Naive thymus-derived CD4-positive, alpha-beta T cell (primary cell): ENCODE measurements at regions of chr22 and their contacts with region 1.

Region 1: DNA sequence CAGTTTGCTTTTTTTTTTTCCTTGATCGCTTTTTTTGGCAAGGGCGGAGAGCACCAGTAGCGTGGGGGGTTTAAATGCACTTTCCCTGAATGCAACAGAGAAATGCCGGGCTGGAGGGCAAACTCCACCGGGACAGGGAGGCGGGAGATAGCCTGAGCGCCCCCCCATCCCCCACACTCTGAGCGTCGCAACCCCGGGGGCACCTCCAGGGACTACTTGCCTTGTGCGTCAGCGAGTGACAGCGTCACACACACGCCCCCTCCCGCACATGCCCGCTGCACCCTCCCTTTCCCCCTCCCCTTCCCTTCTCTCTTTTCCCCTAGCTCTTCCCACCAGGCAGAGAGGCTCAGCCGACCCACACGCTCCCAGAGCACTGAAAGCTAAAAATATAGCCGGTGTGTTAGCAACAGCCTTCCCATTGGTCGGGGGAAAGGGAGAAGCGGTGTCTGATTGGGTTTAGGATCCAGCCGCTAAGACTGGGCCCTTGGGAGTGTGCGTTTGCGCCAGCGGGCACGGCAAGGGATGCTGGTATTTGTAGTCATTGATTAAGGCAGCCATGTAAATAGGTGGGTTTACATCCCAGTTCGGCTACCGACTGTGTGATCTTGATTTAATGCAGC is 1.7 kb upstream of the TOB2 start:
- DNase-seq: peak; percentile 62 to 95 (median 92)
- ATAC-seq: peak; percentile 78
- H3K4me3 ChIP-seq: peak overlapping the region; percentile 90
- H3K4me3 Mint-ChIP-seq: peak overlapping the region; percentile 92 to 98 (median 94)
- H3K27ac ChIP-seq: peak overlapping the region; percentile 88
- H3K27ac Mint-ChIP-seq: peak overlapping the region; percentile 91 to 99 (median 94)
- H3K4me1 ChIP-seq: peaks cover 7% of the 10 kb centered on the region in 2 donors
- H3K4me1 Mint-ChIP-seq: peaks cover 6 to 25% (median 21%) of the 10 kb centered on the region in 7 donors
- H3K27me3 ChIP-seq: no peaks in the 10 kb centered on the region
- H3K27me3 Mint-ChIP-seq: no peaks in the 10 kb centered on the region

Region 2: DNA sequence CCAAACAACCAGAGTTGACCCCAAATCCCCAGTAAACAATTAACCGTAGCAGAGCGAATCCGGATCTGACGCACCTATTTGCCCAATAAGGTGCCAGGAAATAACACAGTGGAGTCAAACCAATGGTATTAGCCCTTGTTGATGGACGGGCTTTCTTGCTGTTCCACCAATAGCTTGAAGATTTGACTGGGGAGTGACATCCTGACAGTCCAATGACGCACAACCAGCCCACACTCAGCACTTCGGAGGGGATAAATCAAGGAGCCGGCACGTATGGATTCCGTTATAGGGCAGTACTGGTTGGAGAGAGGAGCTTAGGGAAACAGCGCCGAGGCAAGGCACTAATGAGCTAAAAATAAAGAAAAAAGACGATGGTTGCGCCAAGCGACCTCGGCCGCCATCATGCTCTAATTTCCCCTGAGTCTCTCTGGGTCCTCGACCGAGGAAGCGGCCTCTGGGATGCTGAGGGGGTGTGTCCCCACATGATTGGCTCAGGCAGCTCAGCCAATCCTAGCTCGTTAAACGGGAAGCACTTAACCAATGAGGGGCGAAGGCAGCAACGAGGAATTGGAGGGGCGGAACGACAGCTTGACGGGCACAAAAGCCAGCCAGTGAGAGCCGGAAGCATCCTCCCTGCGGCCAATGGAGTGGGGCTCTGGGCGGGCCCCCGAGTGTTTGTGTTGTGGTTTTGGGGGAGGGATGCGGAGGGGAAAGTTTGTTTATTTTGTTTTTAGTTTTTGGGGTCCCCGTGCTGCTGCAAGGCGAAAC is 1404.0 kb before region 1 on chr22:
- CTCF ChIA-PET with region 1: no interaction called
- POLR2A ChIA-PET with region 1: no interaction called
- intact Hi-C with region 1: loop called in 1 of 2 experiments (anchors 10 kb)
- DNase-seq: peak; percentile 87 to 100 (median 99)
- ATAC-seq: peak; percentile 92
- H3K4me3 ChIP-seq: peak overlapping the region; percentile 81
- H3K4me3 Mint-ChIP-seq: peak overlapping the region; percentile 94 to 99 (median 98)
- H3K27ac ChIP-seq: peak overlapping the region; percentile 88
- H3K27ac Mint-ChIP-seq: peak overlapping the region; percentile 98 to 100 (median 99)
- H3K4me1 ChIP-seq: peaks cover 15 to 29% of the 10 kb centered on the region in 2 donors
- H3K4me1 Mint-ChIP-seq: peaks cover 23 to 53% (median 40%) of the 10 kb centered on the region in 7 donors
- H3K27me3 ChIP-seq: no peaks in the 10 kb centered on the region
- H3K27me3 Mint-ChIP-seq: peaks cover 3 to 17% (median 7%) of the 10 kb centered on the region in 5 donors

Region 3: GRCh38 chr22:40950962-40951794 is 497.1 kb before region 1 on chr22 and contains the start of gene RBX1:
- CTCF ChIA-PET with region 1: no interaction called
- POLR2A ChIA-PET with region 1: interaction called, 3 read pairs
- intact Hi-C with region 1: loop called (anchors 1 kb)
- DNase-seq: peak; percentile 96 to 100 (median 99)
- ATAC-seq: peak; percentile 92
- H3K4me3 ChIP-seq: peak within 1 kb of the TSS; percentile 98
- H3K4me3 Mint-ChIP-seq: peak within 1 kb of the TSS; percentile 91 to 99 (median 98)
- H3K27ac ChIP-seq: peak within 1 kb of the TSS; percentile 99
- H3K27ac Mint-ChIP-seq: peak within 1 kb of the TSS; percentile 96 to 100 (median 99)
- H3K4me1 ChIP-seq: peaks cover 16 to 19% of the 10 kb centered on the region in 2 donors
- H3K4me1 Mint-ChIP-seq: peaks cover 20 to 43% (median 39%) of the 10 kb centered on the region in 7 donors
- H3K27me3 ChIP-seq: no peaks in the 10 kb centered on the region
- H3K27me3 Mint-ChIP-seq: no peaks in the 10 kb centered on the region
- total RNA-seq, gene RBX1: 28.9 to 91.3 (median 32.7) TPM

Region 4: DNA sequence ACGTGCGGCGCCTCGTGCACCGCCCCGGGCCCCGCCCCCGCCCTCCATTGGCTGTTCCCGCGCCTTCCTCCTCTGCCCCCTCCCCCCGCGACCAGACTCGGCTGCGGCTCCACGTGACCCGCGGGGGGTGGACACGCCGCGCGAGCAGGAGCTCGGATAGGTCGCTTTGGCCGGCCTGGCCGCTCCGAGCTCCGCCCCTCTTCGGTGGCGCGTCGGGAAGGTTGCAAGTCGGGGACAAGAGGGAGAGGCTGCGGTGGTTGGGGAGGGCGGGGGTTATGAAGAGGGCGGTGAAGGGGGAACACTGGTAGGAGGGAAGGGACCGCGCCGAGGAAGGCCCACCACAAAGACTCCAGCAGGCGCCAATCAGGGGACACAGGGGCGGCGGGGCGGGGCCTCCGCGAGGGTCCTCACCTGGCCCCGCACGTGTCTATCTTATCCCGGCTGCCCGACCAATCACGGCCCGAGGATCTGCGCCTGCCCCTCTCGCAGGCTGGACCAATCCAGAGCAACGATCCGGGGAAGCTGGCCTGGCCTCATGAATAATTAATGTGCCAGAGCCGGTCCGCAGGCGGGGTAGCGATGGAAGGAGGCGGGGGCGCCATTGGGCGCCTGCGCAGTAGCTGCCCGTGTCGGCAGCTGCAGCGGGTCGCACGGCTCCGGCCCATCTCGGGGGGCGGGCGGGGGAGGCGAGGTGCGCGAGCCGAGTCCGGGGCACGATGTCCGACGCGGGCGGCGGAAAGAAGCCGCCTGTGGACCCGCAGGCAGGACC is 66.8 kb before region 1 on chr22 and contains the start of gene TEF:
- CTCF ChIA-PET with region 1: no interaction called
- POLR2A ChIA-PET with region 1: interaction called, 23 read pairs
- intact Hi-C with region 1: loop called (anchors 1 kb)
- DNase-seq: peak; percentile 97 to 99 (median 98)
- ATAC-seq: peak; percentile 89
- H3K4me3 ChIP-seq: peak within 1 kb of the TSS; percentile 86
- H3K4me3 Mint-ChIP-seq: peak within 1 kb of the TSS; percentile 90 to 97 (median 94)
- H3K27ac ChIP-seq: peak within 1 kb of the TSS; percentile 95
- H3K27ac Mint-ChIP-seq: peak within 1 kb of the TSS; percentile 94 to 99 (median 98)
- H3K4me1 ChIP-seq: peaks cover 5 to 14% of the 10 kb centered on the region in 2 donors
- H3K4me1 Mint-ChIP-seq: peaks cover 5 to 29% (median 19%) of the 10 kb centered on the region in 7 donors
- H3K27me3 ChIP-seq: no peaks in the 10 kb centered on the region
- H3K27me3 Mint-ChIP-seq: peaks cover 0 to 5% (median 0%) of the 10 kb centered on the region in 5 donors
- total RNA-seq, gene TEF: 3.8 to 8.4 (median 6.2) TPM

Region 5: GRCh38 chr22:41436322-41437113 is 11.8 kb before region 1 on chr22:
- CTCF ChIA-PET with region 1: no interaction called
- POLR2A ChIA-PET with region 1: interaction called, 14 read pairs
- intact Hi-C with region 1: no loop called
- DNase-seq: no peak
- ATAC-seq: no peak
- H3K4me3 ChIP-seq: no peak overlapping the region
- H3K4me3 Mint-ChIP-seq: peak overlapping the region in 1 of 10 donors; percentile 3
- H3K27ac ChIP-seq: no peak overlapping the region
- H3K27ac Mint-ChIP-seq: peak overlapping the region in 4 of 9 donors; percentile 26 to 85 (median 40)
- H3K4me1 ChIP-seq: no peaks in the 10 kb centered on the region
- H3K4me1 Mint-ChIP-seq: peaks cover 0 to 17% (median 10%) of the 10 kb centered on the region in 7 donors
- H3K27me3 ChIP-seq: no peaks in the 10 kb centered on the region
- H3K27me3 Mint-ChIP-seq: no peaks in the 10 kb centered on the region

Region 6: DNA sequence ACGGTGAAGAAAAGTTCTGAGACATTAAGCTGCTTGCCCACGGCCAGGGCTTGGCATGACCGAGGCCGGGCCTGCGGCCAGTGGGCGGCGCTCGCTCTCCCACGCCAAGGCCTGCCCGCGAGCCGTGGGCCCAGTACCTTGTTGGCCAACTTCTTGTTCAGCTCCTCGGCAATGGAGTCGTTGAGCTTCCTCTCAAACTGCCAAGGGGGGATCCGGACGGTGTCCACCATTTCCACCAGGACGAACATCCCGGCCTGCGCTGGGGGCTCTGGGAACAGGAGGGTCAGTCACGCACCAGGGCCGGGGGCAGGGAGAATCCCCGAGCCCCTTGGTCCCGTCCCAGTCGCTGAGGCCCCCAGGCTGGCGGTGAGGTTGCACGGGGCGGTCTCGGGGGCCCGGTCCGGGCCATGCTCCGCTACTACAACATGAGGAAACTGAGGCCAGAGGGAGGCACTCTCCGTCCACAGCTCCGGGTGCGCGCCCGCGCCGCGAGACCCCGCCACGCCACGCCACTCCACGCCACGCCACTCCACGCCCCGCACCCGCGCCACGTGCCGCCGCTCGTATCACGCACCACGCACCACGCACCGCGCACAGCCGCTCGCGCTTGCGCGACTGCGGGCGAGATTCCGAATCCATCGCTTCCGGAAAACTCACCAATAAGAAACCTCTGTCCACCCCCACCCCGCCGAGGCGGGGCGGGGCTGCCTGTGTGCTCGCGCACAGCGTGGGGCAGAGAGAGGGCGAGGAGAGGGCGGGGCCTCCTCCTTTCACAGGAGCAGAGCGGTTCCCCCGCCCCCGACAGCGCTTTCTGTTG is 95.8 kb after region 1 on chr22 and contains the start of gene POLR3H:
- CTCF ChIA-PET with region 1: no interaction called
- POLR2A ChIA-PET with region 1: interaction called, 4 read pairs
- intact Hi-C with region 1: loop called (anchors 1 to 2 kb)
- DNase-seq: peak; percentile 89 to 97 (median 95)
- ATAC-seq: peak; percentile 100
- H3K4me3 ChIP-seq: peak within 1 kb of the TSS; percentile 96
- H3K4me3 Mint-ChIP-seq: peak within 1 kb of the TSS; percentile 82 to 100 (median 97)
- H3K27ac ChIP-seq: peak within 1 kb of the TSS; percentile 84
- H3K27ac Mint-ChIP-seq: peak within 1 kb of the TSS; percentile 88 to 98 (median 95)
- H3K4me1 ChIP-seq: peaks cover 7 to 15% of the 10 kb centered on the region in 2 donors
- H3K4me1 Mint-ChIP-seq: peaks cover 30 to 52% (median 45%) of the 10 kb centered on the region in 7 donors
- H3K27me3 ChIP-seq: no peaks in the 10 kb centered on the region
- H3K27me3 Mint-ChIP-seq: no peaks in the 10 kb centered on the region
- total RNA-seq, gene POLR3H: 21.7 to 59.6 (median 28.5) TPM

Region 7: DNA sequence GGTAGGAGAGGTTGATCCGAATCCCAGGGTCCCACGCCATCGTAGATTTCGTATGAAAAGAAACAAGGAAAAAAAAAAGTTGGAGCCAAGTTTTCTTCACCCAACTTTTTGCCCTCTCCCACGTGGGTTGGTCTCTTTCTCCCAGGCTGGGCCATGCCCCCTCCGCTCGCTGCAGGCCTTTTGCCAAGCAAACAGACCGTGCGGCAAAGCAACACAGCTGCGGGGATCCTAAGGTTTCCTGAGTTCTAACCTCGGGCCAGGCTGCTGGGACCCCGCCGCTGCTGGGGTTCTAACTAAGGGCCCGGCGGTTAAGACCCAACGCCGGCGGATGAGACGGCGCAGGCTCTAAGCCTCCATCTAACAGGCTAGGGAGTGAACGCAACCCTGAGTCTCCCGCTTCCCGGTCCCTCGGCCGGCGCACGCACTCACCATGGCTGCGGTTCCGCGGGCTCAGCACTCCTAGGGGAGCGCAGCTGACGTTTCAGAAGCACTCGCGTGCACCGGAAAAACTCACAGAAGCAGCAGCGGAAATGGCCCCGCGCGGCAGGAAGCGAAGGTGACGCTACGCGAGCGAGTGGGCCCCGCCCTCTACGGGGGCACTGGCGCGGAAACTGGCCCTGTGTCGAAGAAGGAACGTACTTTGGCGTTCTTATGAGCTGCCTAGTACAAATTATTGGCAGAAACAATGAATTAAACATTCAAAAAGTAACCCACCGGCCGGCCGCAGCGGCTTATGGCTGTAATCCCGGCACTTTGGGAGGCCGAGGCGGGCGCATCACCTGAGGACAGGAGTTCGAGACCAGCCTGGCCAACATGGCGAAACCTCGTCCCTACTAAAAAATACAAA is 240.3 kb after region 1 on chr22 and contains the start of gene SNU13:
- CTCF ChIA-PET with region 1: interaction called, 3 read pairs
- POLR2A ChIA-PET with region 1: interaction called, 4 read pairs
- intact Hi-C with region 1: loop called in 1 of 2 experiments (anchors 10 kb)
- DNase-seq: peak; percentile 79 to 94 (median 92)
- ATAC-seq: peak; percentile 97
- H3K4me3 ChIP-seq: peak within 1 kb of the TSS; percentile 98
- H3K4me3 Mint-ChIP-seq: peak within 1 kb of the TSS; percentile 90 to 100 (median 96)
- H3K27ac ChIP-seq: peak within 1 kb of the TSS; percentile 95
- H3K27ac Mint-ChIP-seq: peak within 1 kb of the TSS; percentile 94 to 100 (median 99)
- H3K4me1 ChIP-seq: peaks cover 12 to 13% of the 10 kb centered on the region in 2 donors
- H3K4me1 Mint-ChIP-seq: peaks cover 18 to 51% (median 37%) of the 10 kb centered on the region in 7 donors
- H3K27me3 ChIP-seq: no peaks in the 10 kb centered on the region
- H3K27me3 Mint-ChIP-seq: no peaks in the 10 kb centered on the region
- total RNA-seq, gene SNU13: 117 to 180 (median 122) TPM